ENCODE measurements at regions of chr22 and their contacts with region 1.

Region 1: DNA sequence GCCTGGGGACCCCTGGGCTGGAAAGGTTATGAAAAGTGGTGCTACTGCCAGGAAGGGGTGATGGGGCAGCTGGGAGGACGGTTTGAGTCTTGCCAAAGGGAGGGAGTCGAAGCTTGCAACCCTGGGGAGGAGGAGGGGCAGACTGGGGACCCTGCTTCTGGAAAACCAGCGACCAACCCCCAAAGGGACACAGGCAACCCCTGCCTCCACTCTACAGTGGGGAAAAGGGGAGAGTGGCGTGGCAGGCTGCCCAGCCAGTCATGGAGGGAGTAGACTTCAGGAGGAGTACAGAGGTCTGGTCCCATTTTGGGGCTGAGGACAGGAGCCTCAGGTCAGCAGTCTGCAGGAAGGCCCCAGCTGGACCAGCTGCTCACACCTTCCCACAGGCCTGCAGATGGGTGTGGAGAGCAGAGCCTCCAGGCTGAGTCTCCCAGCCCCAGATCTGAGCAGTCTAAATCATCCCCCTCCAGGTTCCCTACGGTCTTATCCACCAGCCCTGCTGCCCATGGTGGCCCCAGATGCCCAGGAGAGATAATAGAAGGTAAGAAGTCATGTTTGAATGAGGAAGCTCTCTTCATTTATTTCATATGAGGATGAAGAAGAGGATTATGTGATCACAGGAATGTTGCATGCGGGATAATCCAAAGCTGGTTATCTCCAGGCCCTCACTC is 3.3 kb downstream of the DDT start:
- DNase-seq: no peak
- H3K4me3 ChIP-seq: no peak overlapping the region
- H3K4me3 Mint-ChIP-seq: no peak overlapping the region
- H3K27ac ChIP-seq: no peak overlapping the region
- H3K27ac Mint-ChIP-seq: peak overlapping the region in 3 of 7 donors; percentile 7 to 48 (median 37)
- H3K4me1 ChIP-seq: no peaks in the 10 kb centered on the region
- H3K4me1 Mint-ChIP-seq: no peaks in the 10 kb centered on the region
- H3K27me3 ChIP-seq: no peaks in the 10 kb centered on the region
- H3K27me3 Mint-ChIP-seq: no peaks in the 10 kb centered on the region
- CTCF ChIP-seq: no peak

Region 2: DNA sequence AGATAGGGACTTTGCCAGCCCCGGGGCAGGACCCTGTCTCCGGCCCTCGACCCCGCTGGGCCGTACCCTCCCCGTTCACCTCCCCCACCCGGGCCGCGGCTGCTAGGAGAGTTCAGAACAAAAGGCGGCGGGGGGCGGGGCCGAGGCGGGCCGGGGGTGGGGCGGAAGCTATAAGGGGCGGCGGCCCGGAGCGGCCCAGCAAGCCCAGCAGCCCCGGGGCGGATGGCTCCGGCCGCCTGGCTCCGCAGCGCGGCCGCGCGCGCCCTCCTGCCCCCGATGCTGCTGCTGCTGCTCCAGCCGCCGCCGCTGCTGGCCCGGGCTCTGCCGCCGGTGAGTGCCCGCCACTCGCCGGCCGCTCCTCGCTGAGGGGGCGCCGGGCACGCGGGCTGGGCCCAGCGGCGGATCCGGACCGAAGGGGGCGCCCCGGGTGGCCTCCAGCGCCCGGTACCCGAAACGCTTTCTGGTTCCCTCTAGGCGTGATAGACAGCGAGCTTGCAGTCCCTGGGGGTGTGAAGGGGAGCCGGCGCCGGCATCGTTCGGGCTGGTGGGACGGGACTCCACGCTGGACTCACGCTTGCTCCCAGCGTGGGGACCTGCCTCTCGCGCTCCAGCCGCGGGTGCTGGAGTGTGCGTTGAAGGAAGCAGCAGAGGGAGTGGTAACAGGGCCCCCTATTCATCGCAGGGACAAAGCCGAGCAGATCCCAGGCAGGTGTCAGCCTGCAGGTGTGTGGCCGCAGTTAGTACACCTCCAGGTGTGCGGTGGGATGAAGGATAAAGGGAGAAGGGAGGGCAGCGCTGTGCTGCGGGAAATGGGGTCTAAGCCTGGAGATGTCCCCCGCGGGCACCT is 198.1 kb before region 1 on chr22 and contains the start of gene MMP11:
- intact Hi-C with region 1: no loop called
- DNase-seq: peak in 1 of 3 donors; percentile 22
- H3K4me3 ChIP-seq: peak within 1 kb of the TSS in 2 of 3 experiments; percentile 12 to 56
- H3K4me3 Mint-ChIP-seq: peak within 1 kb of the TSS; percentile 62 to 88
- H3K27ac ChIP-seq: no peak within 1 kb of the TSS
- H3K27ac Mint-ChIP-seq: no peak within 1 kb of the TSS
- H3K4me1 ChIP-seq: peaks cover 16 to 25% of the 10 kb centered on the region in 2 donors
- H3K4me1 Mint-ChIP-seq: peaks cover 9% of the 10 kb centered on the region
- H3K27me3 ChIP-seq: peaks cover 7 to 23% of the 10 kb centered on the region in 2 donors
- H3K27me3 Mint-ChIP-seq: peaks cover 30 to 33% (median 31%) of the 10 kb centered on the region in 3 donors
- CTCF ChIP-seq: no peak
- polyA plus RNA-seq, gene MMP11: not detected

Region 3: DNA sequence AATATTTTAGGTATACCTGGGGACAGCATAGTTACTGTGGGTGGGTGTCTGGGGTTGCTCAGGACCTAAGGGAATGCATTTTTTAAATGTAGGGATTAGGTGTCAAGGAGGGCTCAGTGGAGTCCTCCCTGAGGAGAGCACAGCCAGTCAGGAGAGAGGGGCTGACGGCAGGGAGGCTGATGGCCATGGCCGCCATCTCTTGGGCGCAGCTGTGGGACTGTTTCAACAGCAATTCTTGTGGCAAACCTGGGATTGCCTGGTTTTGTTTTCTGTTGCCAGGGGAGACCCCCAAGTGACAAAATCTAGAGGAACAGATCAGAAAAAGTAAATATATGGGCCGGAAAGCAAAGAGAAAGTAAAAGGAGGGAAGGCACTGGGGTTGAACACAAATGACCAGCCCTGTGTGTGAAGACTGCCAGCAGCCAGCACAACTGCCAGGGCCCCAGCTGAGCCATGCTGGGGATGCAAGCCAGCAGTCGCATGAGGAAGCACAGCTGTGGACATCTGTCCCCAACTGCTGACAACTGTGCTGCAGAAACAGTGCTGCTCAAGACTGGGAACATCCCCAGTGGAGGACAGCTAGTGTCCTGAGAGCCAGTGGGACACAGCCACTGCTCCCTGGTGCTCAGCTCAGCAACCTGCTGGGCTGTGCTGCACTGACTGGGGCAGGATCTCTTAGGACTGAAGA is 66.2 kb before region 1 on chr22:
- intact Hi-C with region 1: no loop called
- DNase-seq: no peak
- H3K4me3 ChIP-seq: no peak overlapping the region
- H3K4me3 Mint-ChIP-seq: no peak overlapping the region
- H3K27ac ChIP-seq: no peak overlapping the region
- H3K27ac Mint-ChIP-seq: no peak overlapping the region
- H3K4me1 ChIP-seq: no peaks in the 10 kb centered on the region
- H3K4me1 Mint-ChIP-seq: no peaks in the 10 kb centered on the region
- H3K27me3 ChIP-seq: no peaks in the 10 kb centered on the region
- H3K27me3 Mint-ChIP-seq: peaks cover 1 to 6% (median 2%) of the 10 kb centered on the region in 3 donors
- CTCF ChIP-seq: no peak

Region 4: DNA sequence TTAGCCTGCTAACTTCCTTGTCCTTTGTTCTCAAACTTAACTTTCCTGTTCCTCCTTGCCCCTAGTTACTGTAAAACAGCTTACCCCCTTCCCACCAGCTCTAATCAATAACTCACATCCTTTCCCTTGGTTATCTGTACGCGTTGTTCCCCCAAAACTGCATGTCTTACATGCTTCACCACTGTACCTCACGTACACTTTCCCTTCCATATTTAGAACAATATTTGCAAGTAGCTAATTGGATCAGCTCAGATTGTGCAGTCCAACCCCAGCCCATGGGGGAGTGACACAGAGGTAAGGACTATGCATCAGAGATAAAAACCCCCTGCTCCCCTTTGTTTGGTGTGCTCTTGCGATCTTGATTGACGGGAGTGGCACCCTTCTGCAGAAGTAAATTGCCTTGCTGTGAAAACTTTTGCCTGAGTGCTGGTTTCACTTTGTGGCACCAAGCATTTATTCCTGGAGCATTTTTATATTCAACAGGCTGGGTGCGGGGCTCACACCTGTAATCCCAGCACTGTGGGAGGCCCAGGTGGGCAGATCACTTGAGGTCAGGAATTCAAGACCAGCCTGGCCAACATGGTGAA is 45.8 kb before region 1 on chr22:
- intact Hi-C with region 1: loop called in 1 of 2 experiments (anchors 5 kb)
- DNase-seq: no peak
- H3K4me3 ChIP-seq: no peak overlapping the region
- H3K4me3 Mint-ChIP-seq: no peak overlapping the region
- H3K27ac ChIP-seq: no peak overlapping the region
- H3K27ac Mint-ChIP-seq: no peak overlapping the region
- H3K4me1 ChIP-seq: peaks cover 4 to 8% of the 10 kb centered on the region in 2 donors
- H3K4me1 Mint-ChIP-seq: peaks cover 8% of the 10 kb centered on the region
- H3K27me3 ChIP-seq: no peaks in the 10 kb centered on the region
- H3K27me3 Mint-ChIP-seq: peaks cover 2 to 22% (median 15%) of the 10 kb centered on the region in 3 donors
- CTCF ChIP-seq: no peak